Calu3 (cell line): ENCODE measurements at regions of chr19 and their contacts with region 1.

Region 1: GRCh38 chr19:49755956-49756355 is 7.2 kb downstream of the TSKS start:
- DNase-seq: no peak
- H3K4me3 Mint-ChIP-seq: no peak overlapping the region
- H3K27ac Mint-ChIP-seq: no peak overlapping the region
- H3K4me1 Mint-ChIP-seq: no peaks in the 10 kb centered on the region
- H3K27me3 Mint-ChIP-seq: peaks cover 18% of the 10 kb centered on the region
- CTCF ChIP-seq: no peak

Region 2: DNA sequence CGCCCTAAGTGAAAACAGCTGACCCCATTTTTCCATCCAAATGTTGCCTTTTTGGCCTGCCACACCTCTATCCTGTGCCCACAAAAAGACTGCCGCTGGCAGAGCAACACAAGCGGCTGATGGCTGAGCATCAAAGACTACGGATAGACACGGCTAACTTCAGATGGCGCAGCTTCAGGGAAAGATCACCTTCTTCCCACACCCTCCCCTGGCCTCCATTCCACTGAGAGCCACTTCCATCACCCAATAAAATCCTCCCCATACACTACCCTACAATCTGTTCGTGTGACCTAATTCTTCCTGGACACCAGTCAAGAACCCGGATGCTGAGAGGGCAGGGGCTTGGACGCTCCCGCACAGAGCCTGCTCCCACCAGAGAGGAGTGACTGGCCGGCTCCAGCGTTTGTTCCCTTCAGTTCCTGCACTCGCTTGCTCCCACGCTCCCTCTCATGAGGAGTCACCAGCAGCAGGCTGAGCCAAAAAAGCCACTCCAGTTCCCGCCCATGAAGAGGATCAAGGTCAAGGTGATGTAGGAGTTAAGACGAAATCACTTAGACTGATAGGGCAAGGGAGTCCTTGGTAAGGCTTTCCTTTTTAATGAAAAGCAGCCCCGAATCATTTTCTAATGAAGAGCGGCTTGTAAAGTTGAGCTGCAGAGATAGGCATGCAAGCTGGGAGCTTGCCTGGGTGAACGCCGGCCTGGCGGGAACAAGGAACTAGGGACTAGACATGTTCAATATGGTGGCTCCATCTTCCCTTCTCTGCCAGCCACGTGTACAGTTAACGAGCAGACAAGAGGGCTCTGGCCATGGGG is 28.5 kb before region 1 on chr19:
- CTCF ChIA-PET with region 1: no interaction called
- intact Hi-C with region 1: loop called (anchors 2 kb)
- DNase-seq: no peak
- H3K4me3 Mint-ChIP-seq: no peak overlapping the region
- H3K27ac Mint-ChIP-seq: no peak overlapping the region
- H3K4me1 Mint-ChIP-seq: no peaks in the 10 kb centered on the region
- H3K27me3 Mint-ChIP-seq: peaks cover 44% of the 10 kb centered on the region
- CTCF ChIP-seq: no peak